MCF 10A (cell line): ENCODE measurements at regions of chr3 and their contacts with region 1.

Region 1: DNA sequence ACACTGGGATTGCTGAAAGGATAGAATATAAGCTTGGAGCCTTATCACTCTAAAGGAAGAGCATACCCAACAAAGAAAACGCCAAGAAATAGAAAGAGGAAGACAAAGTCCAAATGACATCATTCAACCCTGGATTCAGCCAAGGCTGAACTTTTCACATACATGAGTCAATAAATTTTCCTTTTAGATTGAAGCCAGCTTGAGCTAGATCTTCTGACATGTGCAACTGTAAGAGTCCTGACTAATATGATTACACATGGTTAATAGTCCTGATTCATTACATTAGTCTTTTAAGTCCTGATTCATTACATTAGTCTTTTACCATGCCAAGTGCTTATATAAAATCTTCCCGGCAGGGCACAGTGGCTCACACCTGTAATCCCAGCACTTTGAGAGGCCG is 13.6 kb upstream of the DENND6A start:
- DNase-seq: peak; percentile 60
- H3K4me3 Mint-ChIP-seq: no peak overlapping the region
- H3K27ac Mint-ChIP-seq: no peak overlapping the region
- H3K4me1 Mint-ChIP-seq: peaks cover 13% of the 10 kb centered on the region
- H3K27me3 Mint-ChIP-seq: no peaks in the 10 kb centered on the region
- CTCF ChIP-seq: no peak

Region 2: DNA sequence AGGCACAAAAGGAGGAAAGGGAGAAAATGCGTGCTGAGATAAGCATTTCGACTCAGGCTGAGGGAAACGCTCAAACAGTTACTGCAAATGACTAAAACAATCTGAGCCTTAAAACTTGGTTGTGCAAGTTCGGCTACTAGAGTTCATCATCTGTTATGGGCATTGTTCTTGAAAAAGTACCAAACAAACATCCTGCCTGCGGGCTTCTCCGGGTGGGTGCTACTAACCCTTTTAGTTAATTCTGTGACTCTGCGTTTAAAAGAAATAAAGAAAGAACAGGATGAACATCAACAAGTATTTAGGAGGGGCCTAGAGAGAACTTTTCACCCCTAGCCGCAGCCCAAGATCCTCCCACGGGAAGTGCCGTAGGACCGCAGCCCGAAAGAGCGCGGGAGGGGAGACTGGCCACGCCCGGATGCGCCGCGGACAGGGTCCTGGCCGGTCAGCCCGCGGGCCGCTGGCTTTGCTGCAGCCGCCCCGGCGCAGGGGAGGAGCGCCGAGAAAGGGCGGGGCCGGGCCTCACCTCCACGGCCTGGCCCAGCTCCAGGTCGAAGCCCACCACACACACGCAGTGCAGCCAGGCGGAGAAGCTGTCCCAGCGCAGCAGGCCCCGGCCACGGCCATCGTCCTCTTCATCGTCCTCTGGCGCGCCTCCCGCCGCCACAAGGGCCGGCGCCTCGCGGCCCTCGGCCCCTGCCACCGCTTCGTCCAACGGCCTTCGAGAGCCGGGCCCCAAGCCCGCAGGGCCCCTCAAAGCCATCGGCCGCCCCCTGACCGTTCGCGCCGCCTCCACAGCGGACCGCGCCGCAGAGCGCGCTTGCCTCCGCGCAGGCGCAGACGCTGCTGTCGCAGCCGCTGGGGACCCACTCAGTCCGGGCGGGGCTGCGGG is 14.0 kb before region 1 on chr3 and contains the start of gene DENND6A:
- CTCF ChIA-PET with region 1: interaction called, 3 read pairs
- POLR2A ChIA-PET with region 1: interaction called, 13 read pairs
- intact Hi-C with region 1: no loop called
- DNase-seq: peak; percentile 91
- H3K4me3 Mint-ChIP-seq: peak within 1 kb of the TSS; percentile 80
- H3K27ac Mint-ChIP-seq: peak within 1 kb of the TSS; percentile 71
- H3K4me1 Mint-ChIP-seq: peaks cover 25% of the 10 kb centered on the region
- H3K27me3 Mint-ChIP-seq: no peaks in the 10 kb centered on the region
- CTCF ChIP-seq: no peak
- total RNA-seq, gene DENND6A: 21.2 and 22.3 TPM in 2 replicates

Region 3: DNA sequence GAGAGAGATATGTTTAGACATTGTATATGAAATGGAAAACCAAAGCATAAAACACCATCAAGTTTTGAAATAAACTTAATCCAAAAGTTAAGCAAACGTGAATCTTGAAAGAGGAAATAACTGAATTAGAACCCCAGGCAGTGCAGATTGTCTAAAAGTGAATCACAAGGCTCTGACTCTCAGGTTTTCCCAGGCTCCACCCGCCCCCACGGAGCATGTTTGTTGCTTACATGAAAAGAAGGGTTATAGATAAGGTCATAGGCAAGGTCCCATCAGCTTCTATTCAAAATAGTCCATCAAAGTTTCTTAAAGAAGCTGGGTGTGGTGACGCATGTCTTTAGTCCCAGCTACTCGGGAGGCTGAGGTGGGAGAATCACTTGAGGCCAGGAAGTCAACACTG is 20.6 kb after region 1 on chr3:
- CTCF ChIA-PET with region 1: no interaction called
- POLR2A ChIA-PET with region 1: no interaction called
- intact Hi-C with region 1: no loop called
- DNase-seq: no peak
- H3K4me3 Mint-ChIP-seq: no peak overlapping the region
- H3K27ac Mint-ChIP-seq: no peak overlapping the region
- H3K4me1 Mint-ChIP-seq: no peaks in the 10 kb centered on the region
- H3K27me3 Mint-ChIP-seq: no peaks in the 10 kb centered on the region
- CTCF ChIP-seq: no peak